Adrenal gland (tissue), 19 donors: ENCODE measurements at regions of chr10 and their contacts with region 1.

Region 1: GRCh38 chr10:97914837-97915211 is 65.2 kb downstream of the GOLGA7B start:
- DNase-seq: peak; percentile 67 to 81 (median 72)
- H3K4me3 ChIP-seq: no peak overlapping the region
- H3K27ac ChIP-seq: no peak overlapping the region
- H3K4me1 ChIP-seq: no peaks in the 10 kb centered on the region
- H3K27me3 ChIP-seq: peaks cover 8% of the 10 kb centered on the region
- CTCF ChIP-seq: peak; percentile 73 to 91 (median 84)
- POLR2A ChIP-seq: no peak

Region 2: GRCh38 chr10:97771055-97771811 is 143.6 kb before region 1 on chr10:
- intact Hi-C with region 1: no loop called
- DNase-seq: no peak
- H3K4me3 ChIP-seq: no peak overlapping the region
- H3K27ac ChIP-seq: no peak overlapping the region
- H3K4me1 ChIP-seq: no peaks in the 10 kb centered on the region
- H3K27me3 ChIP-seq: peaks cover 18% of the 10 kb centered on the region
- CTCF ChIP-seq: no peak
- POLR2A ChIP-seq: no peak

Region 3: DNA sequence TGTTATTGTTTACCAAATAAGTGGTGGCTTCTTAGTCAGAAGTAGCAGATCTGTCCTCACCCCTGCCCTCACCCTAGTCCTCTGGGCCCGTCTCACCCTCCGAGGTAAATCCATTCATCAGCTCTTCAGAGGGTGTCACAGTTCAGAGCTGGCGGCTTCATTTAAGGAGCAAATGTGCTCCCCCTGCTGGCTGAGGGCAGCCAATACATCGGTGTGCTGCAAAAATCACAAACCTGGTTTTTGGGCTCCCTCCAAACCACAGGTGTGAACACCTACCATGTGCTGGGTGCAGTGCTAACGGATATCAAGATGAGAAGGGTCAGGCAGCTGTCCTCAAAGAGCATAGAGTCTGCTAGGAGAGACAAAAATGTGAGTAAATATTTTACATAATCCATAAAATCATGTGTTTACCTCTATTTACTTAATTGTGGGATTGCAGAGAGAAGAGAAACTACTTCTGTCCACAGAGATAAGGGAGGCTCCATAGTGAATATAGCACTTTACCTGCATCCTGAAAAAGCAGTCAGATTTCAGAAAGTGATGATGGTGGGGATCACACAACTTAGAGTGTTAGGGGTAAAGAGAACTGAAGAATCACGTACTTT is 131.1 kb after region 1 on chr10:
- intact Hi-C with region 1: loop called (anchors 2 to 5 kb)
- DNase-seq: peak; percentile 36 to 67 (median 51)
- H3K4me3 ChIP-seq: no peak overlapping the region
- H3K27ac ChIP-seq: no peak overlapping the region
- H3K4me1 ChIP-seq: no peaks in the 10 kb centered on the region
- H3K27me3 ChIP-seq: peaks cover 3% of the 10 kb centered on the region
- CTCF ChIP-seq: peak; percentile 53 to 89 (median 67)
- POLR2A ChIP-seq: no peak

Region 4: DNA sequence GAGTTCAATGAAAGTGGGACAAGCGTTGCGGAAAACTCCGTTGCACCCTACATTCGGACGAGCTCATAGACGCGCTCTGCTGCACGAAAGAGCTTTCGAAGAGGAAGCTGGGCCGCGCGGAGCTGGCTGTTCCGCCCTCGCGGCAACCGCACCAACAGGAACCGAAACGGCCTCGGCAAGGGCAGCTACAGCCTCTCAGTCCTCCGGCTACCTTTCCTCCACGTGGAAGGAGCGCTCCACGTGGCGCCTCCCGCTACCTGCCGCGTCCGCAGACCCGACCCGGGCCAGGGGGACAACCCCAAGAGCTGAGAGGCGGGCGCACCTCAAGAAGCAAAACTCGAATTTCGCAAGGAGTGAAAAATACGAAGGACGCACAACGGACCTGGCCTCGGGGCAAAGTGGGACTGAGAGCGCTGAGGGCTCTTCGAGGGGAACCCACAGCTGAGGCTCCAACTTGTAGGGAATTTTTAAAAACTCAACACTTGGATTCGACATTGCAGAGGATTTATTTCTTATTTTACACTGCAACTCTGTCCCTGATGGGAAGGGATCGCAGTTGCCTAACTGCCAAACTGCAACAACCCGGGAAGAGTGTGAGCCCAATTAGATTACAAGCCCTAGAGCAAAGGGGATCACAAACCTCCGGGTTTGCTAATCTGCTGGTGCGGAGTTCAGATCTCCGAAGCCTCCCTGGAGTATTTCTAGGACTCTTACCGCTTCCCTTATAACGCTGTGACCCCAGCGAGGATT is 1319.4 kb after region 1 on chr10:
- intact Hi-C with region 1: loop called in 1 of 2 experiments (anchors 10 kb)
- DNase-seq: peak in 6 of 7 donors; percentile 25 to 57 (median 34)
- H3K4me3 ChIP-seq: peak overlapping the region in 2 of 4 donors; percentile 11 to 51
- H3K27ac ChIP-seq: no peak overlapping the region
- H3K4me1 ChIP-seq: peaks cover 0 to 16% of the 10 kb centered on the region in 2 donors
- H3K27me3 ChIP-seq: peaks cover 66% of the 10 kb centered on the region
- CTCF ChIP-seq: no peak
- POLR2A ChIP-seq: no peak